T-cell (primary cell): ENCODE measurements at regions of chr4 and their contacts with region 1.

Region 1: DNA sequence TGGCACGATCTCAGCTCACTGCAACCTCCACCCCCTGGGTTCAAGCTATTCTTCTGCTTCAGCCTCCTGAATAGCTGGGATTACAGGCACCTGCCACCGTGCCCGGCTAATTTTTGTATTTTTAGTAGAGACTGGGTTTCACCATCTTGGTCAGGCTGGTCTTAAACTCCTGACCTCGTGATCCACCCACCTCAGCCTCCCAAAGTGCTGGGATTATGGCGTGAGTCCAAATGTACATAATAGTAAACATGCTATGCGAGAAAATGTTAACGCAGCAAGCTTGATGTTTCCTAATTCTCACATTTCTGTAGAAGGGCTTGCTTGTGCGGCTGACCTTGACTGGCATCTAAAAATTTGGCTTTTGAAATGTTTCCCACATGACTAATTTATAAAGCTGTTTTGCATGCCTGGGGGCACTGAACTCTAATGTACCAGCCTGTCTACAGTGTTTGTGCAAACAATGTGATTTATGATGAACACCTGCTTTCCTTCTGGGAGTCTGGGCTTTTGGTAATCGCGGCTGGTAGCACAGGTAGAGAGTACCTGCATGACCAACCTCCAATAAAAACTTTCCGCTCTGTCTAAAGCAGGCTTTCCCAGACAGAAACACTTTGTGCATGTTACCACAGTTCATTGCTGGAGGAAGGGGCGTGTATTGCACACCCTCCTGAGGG is 216.8 kb downstream of the IL15 start:
- DNase-seq: no peak
- ATAC-seq: no peak
- H3K4me3 ChIP-seq: no peak overlapping the region
- H3K4me3 Mint-ChIP-seq: no peak overlapping the region
- H3K27ac ChIP-seq: no peak overlapping the region
- H3K27ac Mint-ChIP-seq: no peak overlapping the region
- H3K4me1 ChIP-seq: no peaks in the 10 kb centered on the region
- H3K4me1 Mint-ChIP-seq: no peaks in the 10 kb centered on the region
- H3K27me3 ChIP-seq: peaks cover 0 to 6% of the 10 kb centered on the region in 2 experiments
- H3K27me3 Mint-ChIP-seq: peaks cover 8 to 19% of the 10 kb centered on the region in 2 donors

Region 2: DNA sequence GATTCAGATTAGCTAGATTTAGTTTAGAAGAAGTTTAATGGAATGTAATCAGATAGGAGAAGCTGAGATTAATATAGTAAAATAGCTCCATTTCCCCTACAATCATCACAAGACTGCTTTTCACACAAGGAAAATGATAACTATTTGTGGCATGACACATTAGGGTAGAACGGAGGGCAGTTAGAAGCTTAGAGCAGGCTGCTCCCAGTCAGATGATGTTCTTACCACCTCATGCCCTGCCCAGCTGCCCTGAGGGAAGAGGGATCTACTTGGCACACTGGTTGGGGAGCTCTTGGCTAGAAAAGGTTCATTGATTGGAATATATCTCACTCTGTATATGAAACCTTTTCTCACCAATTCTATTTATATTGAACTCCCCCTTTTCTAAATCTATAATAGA is 397.6 kb before region 1 on chr4:
- CTCF ChIA-PET with region 1: interaction called in 1 of 2 experiments, 10 read pairs
- POLR2A ChIA-PET with region 1: no interaction called
- DNase-seq: no peak
- ATAC-seq: no peak
- H3K4me3 ChIP-seq: no peak overlapping the region
- H3K4me3 Mint-ChIP-seq: no peak overlapping the region
- H3K27ac ChIP-seq: no peak overlapping the region
- H3K27ac Mint-ChIP-seq: no peak overlapping the region
- H3K4me1 ChIP-seq: no peaks in the 10 kb centered on the region
- H3K4me1 Mint-ChIP-seq: no peaks in the 10 kb centered on the region
- H3K27me3 ChIP-seq: no peaks in the 10 kb centered on the region
- H3K27me3 Mint-ChIP-seq: peaks cover 1 to 8% of the 10 kb centered on the region in 2 donors

Region 3: DNA sequence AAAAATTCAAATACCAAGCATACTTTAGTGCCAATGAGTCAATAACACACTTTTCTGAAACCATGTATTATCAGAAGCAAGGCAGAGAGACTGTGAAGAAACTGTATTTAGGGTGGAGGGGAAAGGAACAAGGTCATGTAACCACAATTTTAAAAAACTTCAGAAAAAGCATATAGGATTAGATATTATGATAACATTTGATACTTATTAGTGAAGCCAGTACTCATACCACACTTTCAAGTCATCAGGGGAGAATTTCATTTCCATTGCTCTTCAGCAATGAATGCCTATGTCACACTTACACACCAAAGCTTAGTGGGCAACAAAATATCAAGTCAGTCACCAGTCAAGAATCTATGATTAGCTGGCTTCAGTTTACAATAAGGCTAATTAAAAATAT is 385.4 kb after region 1 on chr4:
- CTCF ChIA-PET with region 1: no interaction called
- POLR2A ChIA-PET with region 1: no interaction called
- DNase-seq: no peak
- ATAC-seq: no peak
- H3K4me3 ChIP-seq: no peak overlapping the region
- H3K4me3 Mint-ChIP-seq: no peak overlapping the region
- H3K27ac ChIP-seq: no peak overlapping the region
- H3K27ac Mint-ChIP-seq: peak overlapping the region; percentile 1 to 77
- H3K4me1 ChIP-seq: no peaks in the 10 kb centered on the region
- H3K4me1 Mint-ChIP-seq: peaks cover 31 to 48% (median 46%) of the 10 kb centered on the region in 3 donors
- H3K27me3 ChIP-seq: no peaks in the 10 kb centered on the region
- H3K27me3 Mint-ChIP-seq: no peaks in the 10 kb centered on the region

Region 4: GRCh38 chr4:142379277-142380057 is 526.2 kb after region 1 on chr4:
- CTCF ChIA-PET with region 1: no interaction called
- POLR2A ChIA-PET with region 1: no interaction called
- DNase-seq: no peak
- ATAC-seq: peak in 1 of 4 experiments; percentile 28
- H3K4me3 ChIP-seq: no peak overlapping the region
- H3K4me3 Mint-ChIP-seq: no peak overlapping the region
- H3K27ac ChIP-seq: no peak overlapping the region
- H3K27ac Mint-ChIP-seq: peak overlapping the region; percentile 76 to 94
- H3K4me1 ChIP-seq: peaks cover 2 to 5% of the 10 kb centered on the region in 2 experiments
- H3K4me1 Mint-ChIP-seq: peaks cover 73 to 84% (median 81%) of the 10 kb centered on the region in 3 donors
- H3K27me3 ChIP-seq: no peaks in the 10 kb centered on the region
- H3K27me3 Mint-ChIP-seq: no peaks in the 10 kb centered on the region